ENCODE measurements at regions of chr10 and their contacts with region 1.

Region 1: DNA sequence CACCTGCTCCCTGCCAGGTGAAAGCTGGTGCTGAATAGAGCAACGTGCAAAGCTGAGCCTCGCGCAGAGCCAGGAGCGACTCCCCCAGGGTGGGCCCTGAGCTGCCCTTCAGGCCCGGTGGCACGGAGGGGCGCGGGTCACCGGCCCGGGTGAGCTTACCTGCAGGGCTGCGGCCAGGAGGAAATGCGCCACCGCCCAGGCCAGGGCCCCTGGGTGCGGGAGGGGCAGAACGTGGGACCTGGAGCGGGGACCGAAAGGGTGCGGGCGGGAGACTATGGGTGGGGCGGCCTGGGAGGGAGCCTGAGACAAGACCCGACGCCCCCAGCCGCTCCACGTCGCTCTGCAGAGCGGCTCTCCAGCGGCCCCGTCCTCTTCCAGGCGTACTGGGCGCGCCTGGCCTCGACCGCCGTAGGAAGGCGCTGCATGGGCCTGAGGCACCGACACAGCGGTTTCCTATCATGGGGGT is 122.1 kb downstream of the BTAF1 start:
- H3K4me3 ChIP-seq: no peak overlapping the region
- H3K27ac ChIP-seq: no peak overlapping the region
- H3K4me1 ChIP-seq: no peaks in the 10 kb centered on the region
- CTCF ChIP-seq: no peak

Region 2: DNA sequence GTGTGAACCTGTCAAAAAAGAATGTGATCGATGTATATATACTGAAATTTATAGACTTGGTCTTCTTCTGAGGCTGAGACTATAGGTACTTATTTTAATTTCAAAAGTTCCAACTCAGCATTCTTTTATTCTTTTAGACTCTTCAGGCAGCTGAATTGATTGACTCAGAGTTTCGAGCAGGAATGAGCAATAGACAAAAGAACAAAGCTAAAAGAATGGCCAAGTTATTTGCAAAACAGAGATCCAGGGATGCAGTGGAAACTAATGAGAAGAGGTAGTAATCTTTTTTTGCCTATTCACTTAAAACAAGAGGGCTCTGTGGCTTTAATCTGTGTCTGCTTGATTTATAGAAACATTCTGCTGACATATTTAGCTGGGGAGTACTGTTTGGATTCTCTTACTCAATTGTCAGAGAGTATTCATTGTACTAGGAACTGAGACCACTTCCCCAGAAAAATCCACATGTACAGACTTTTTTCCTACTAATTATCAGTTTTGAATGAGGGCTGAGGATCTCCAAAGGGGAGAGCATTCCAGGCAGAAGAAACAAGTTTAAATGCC is 92.0 kb before region 1 on chr10:
- CTCF ChIA-PET with region 1: no interaction called
- POLR2A ChIA-PET with region 1: no interaction called
- H3K4me3 ChIP-seq: no peak overlapping the region
- H3K27ac ChIP-seq: no peak overlapping the region
- H3K4me1 ChIP-seq: no peaks in the 10 kb centered on the region
- CTCF ChIP-seq: no peak

Region 3: DNA sequence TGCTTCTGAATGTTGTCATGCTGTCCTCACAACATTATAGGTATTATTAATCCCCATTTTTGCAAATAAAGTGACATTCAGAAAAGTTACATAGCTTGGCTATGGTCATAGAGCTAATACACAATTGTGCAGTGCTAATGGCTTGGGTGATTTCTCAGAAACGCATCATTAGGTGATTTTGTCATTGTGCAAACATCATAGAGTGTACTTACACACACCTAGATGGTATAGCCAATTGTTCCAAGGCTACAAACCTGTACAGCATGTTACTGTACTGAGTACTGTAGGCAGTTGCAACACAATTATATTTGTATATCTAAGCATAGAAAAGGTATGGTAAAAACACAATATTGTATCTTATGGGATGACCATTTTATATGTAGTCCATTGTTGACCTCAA is 31.1 kb before region 1 on chr10:
- CTCF ChIA-PET with region 1: no interaction called
- POLR2A ChIA-PET with region 1: no interaction called
- H3K4me3 ChIP-seq: no peak overlapping the region
- H3K27ac ChIP-seq: no peak overlapping the region
- H3K4me1 ChIP-seq: no peaks in the 10 kb centered on the region
- CTCF ChIP-seq: no peak

Region 4: GRCh38 chr10:92094960-92095359 is 49.3 kb after region 1 on chr10:
- CTCF ChIA-PET with region 1: interaction called, 12 read pairs
- POLR2A ChIA-PET with region 1: no interaction called
- H3K4me3 ChIP-seq: no peak overlapping the region
- H3K27ac ChIP-seq: no peak overlapping the region
- H3K4me1 ChIP-seq: no peaks in the 10 kb centered on the region
- CTCF ChIP-seq: no peak

Measured in HEK293 (cell line).